ENCODE measurements at regions of chr10 and their contacts with region 1.

Region 1: GRCh38 chr10:76576276-76576962 is 1061.2 kb downstream of the KCNMA1 start:
- DNase-seq: no peak
- ATAC-seq: peak; percentile 91

Region 2: GRCh38 chr10:76177945-76178344 is 398.5 kb before region 1 on chr10:
- intact Hi-C with region 1: no loop called
- DNase-seq: no peak
- ATAC-seq: no peak

Region 3: DNA sequence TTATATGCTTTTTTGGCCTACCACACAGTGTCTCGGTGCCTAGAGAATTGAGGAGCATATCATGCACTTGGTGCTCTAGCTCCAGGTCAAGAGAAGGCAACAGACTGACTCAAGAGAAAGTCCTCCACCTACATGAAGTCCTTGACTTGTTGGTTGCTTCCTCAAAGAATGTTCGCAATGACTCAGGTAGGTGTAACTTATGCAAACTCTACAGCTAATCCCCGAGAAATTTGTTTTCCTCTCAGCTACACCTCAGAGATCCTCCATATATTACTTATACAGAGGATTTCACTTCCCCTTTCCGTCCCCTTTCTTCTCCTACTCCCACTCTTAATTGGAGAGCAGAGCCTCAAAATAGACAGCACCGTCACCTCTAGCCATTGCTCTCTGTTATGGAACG is 48.1 kb after region 1 on chr10:
- intact Hi-C with region 1: loop called (anchors 10 kb)
- DNase-seq: no peak
- ATAC-seq: no peak

Region 4: DNA sequence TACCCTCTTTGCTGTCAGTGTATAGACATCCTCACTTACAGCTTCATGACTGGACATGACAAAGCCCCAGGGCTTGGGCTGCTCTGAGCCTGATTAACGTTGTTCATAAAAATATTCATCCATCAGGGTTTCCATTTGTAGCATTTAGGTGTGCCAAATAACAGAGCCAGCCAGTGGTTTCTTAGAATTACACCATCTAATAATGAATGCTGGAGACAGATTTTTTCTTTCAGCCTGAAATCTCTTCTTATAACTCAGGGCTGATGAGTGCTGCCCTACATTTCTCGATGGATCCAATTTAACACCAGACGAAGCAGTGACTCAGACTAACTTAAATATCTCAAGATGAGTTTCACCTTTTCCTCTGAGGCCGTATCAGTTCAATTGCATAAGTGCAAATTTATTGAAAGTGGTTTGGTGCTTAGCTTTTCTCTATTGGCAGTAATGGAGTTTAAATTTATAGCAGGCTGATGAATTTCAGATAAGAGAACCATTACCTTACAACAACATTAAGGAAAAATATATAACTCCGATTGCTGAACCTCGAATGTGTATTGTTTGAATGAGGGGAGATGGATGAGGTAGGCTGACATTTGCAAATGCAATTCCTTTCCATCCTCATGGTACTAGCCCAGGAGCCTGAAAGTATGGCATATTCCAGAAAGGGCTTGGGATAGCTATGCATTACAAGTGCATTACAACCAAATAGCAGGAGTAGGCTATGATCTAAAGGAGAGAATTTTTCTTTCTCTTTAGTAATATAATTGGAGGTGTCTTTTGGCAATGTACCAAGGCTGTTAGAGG is 160.6 kb after region 1 on chr10:
- intact Hi-C with region 1: no loop called
- DNase-seq: no peak
- ATAC-seq: no peak

Region 5: GRCh38 chr10:76882245-76882644 is 305.8 kb after region 1 on chr10:
- intact Hi-C with region 1: loop called (anchors 10 kb)
- DNase-seq: no peak
- ATAC-seq: peak; percentile 53

Region 6: GRCh38 chr10:76922666-76923065 is 346.2 kb after region 1 on chr10:
- intact Hi-C with region 1: no loop called
- DNase-seq: no peak
- ATAC-seq: no peak

Measured in Right ventricle myocardium inferior (tissue), 1 donor.